ENCODE measurements at regions of chr5 and their contacts with region 1.

Region 1: DNA sequence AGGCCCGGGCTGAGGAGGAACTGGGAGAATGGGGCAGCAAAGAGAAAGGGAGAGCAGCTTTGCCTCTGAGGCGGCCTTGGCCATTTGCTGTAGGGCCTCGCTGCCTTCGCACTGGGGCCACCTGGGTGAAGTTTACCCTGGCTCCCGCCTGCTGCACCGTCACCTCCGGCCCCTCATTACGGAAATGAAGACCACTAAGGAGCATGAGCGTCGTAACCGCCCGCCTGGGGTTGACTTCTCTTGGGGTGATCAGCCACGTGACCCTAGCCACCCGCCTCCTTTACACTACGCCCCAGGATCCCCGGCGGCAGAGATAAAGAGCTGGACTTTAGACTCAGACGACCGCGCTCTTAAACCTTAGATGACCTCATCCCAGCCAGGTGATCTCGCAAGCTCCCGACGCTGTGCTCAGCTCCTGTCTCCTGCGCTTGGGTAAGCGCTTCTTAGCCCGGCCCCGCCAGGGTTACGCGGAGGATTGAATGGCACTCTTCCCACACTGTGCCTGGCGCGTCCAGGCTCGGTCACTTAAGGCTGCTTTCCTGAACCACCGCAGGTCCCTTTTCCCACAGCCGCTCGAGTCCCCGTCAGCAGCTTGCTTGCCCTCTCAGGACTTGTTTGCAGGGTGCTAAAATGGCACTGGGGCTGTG is 107.9 kb upstream of the LARP1 start:
- DNase-seq: peak; percentile 79 to 81
- H3K4me3 ChIP-seq: peak overlapping the region in 1 of 3 donors; percentile 16
- H3K27ac ChIP-seq: no peak overlapping the region
- H3K4me1 ChIP-seq: peaks cover 10 to 12% of the 10 kb centered on the region in 2 donors
- H3K27me3 ChIP-seq: no peaks in the 10 kb centered on the region
- CTCF ChIP-seq: no peak
- POLR2A ChIP-seq: no peak

Region 2: DNA sequence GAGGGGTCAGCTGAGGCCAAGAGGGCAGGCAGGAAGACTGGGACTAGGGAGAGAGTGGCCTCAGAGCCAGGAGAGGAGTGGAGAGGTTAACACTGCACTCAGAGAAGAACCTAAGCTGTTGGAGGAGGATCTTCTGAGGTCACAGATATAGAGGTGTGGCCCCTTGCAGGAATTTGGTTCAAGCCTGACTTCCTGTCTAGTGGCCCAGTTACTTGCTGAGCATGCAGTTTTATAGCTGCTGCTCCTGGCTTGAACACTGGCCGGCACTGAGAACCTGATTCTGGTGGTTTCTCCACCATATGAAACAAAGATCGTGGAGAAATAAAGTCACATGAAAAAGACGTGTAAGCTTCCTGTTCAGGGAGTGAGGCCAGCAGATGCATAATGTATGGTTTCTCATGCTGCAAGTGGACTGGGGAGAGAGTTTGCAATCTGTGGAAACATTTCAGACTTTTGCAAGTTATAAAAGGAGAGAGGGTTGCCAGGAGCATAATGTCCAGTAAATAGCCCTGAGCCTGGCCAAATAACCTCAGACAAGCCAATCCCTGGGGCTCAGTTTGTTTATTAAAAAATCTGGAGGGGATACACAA is 374.1 kb before region 1 on chr5:
- intact Hi-C with region 1: no loop called
- DNase-seq: peak; percentile 71 to 79
- H3K4me3 ChIP-seq: no peak overlapping the region
- H3K27ac ChIP-seq: peak overlapping the region; percentile 50 to 64 (median 59)
- H3K4me1 ChIP-seq: peaks cover 36 to 37% of the 10 kb centered on the region in 2 donors
- H3K27me3 ChIP-seq: no peaks in the 10 kb centered on the region
- CTCF ChIP-seq: no peak
- POLR2A ChIP-seq: peak in 1 of 2 donors; percentile 36

Region 3: GRCh38 chr5:154811653-154812365 is 164.6 kb after region 1 on chr5:
- intact Hi-C with region 1: loop called (anchors 5 kb)
- DNase-seq: peak; percentile 64 to 68
- H3K4me3 ChIP-seq: no peak overlapping the region
- H3K27ac ChIP-seq: peak overlapping the region in 1 of 3 donors; percentile 5
- H3K4me1 ChIP-seq: no peaks in the 10 kb centered on the region
- H3K27me3 ChIP-seq: no peaks in the 10 kb centered on the region
- CTCF ChIP-seq: peak; percentile 81 to 95 (median 88)
- POLR2A ChIP-seq: peak in 1 of 2 donors; percentile 7